Mammary epithelial cell (primary cell): ENCODE measurements at regions of chr5 and their contacts with region 1.

Region 1: GRCh38 chr5:90264689-90265544 is 144.6 kb downstream of the CETN3 start:
- DNase-seq: peak; percentile 5
- H3K4me3 ChIP-seq: no peak overlapping the region
- H3K27ac ChIP-seq: no peak overlapping the region
- H3K4me1 ChIP-seq: no peaks in the 10 kb centered on the region
- H3K27me3 ChIP-seq: no peaks in the 10 kb centered on the region
- CTCF ChIP-seq: peak; percentile 93 to 96

Region 2: GRCh38 chr5:88724201-88724600 is 1540.7 kb before region 1 on chr5:
- CTCF ChIA-PET with region 1: no interaction called
- dilution Hi-C with region 1: no loop called
- in situ Hi-C with region 1: loop called (anchors 25 kb)
- intact Hi-C with region 1: loop called (anchors 1 kb)
- DNase-seq: peak; percentile 18
- H3K4me3 ChIP-seq: no peak overlapping the region
- H3K27ac ChIP-seq: no peak overlapping the region
- H3K4me1 ChIP-seq: no peaks in the 10 kb centered on the region
- H3K27me3 ChIP-seq: no peaks in the 10 kb centered on the region
- CTCF ChIP-seq: peak; percentile 23 to 35

Region 3: GRCh38 chr5:90184764-90185163 is 80.2 kb before region 1 on chr5:
- CTCF ChIA-PET with region 1: no interaction called
- dilution Hi-C with region 1: no loop called
- in situ Hi-C with region 1: no loop called
- intact Hi-C with region 1: loop called (anchors 10 kb)
- DNase-seq: no peak
- H3K4me3 ChIP-seq: no peak overlapping the region
- H3K27ac ChIP-seq: no peak overlapping the region
- H3K4me1 ChIP-seq: peaks cover 6% of the 10 kb centered on the region
- H3K27me3 ChIP-seq: no peaks in the 10 kb centered on the region
- CTCF ChIP-seq: no peak